ENCODE measurements at regions of chr7 and their contacts with region 1.

Region 1: GRCh38 chr7:148503875-148504487 is 86.6 kb upstream of the C7orf33 start:
- DNase-seq: no peak
- ATAC-seq: no peak
- H3K4me3 Mint-ChIP-seq: no peak overlapping the region
- H3K27ac Mint-ChIP-seq: no peak overlapping the region
- H3K4me1 Mint-ChIP-seq: peaks cover 36% of the 10 kb centered on the region
- H3K27me3 Mint-ChIP-seq: peaks cover 24% of the 10 kb centered on the region

Region 2: GRCh38 chr7:148230296-148230695 is 273.7 kb before region 1 on chr7:
- CTCF ChIA-PET with region 1: no interaction called
- POLR2A ChIA-PET with region 1: no interaction called
- intact Hi-C with region 1: no loop called
- DNase-seq: no peak
- ATAC-seq: no peak
- H3K4me3 Mint-ChIP-seq: no peak overlapping the region
- H3K27ac Mint-ChIP-seq: no peak overlapping the region
- H3K4me1 Mint-ChIP-seq: no peaks in the 10 kb centered on the region
- H3K27me3 Mint-ChIP-seq: peaks cover 7% of the 10 kb centered on the region

Region 3: GRCh38 chr7:148385009-148385682 is 118.8 kb before region 1 on chr7:
- CTCF ChIA-PET with region 1: no interaction called
- POLR2A ChIA-PET with region 1: no interaction called
- intact Hi-C with region 1: no loop called
- DNase-seq: no peak
- ATAC-seq: no peak
- H3K4me3 Mint-ChIP-seq: no peak overlapping the region
- H3K27ac Mint-ChIP-seq: no peak overlapping the region
- H3K4me1 Mint-ChIP-seq: no peaks in the 10 kb centered on the region
- H3K27me3 Mint-ChIP-seq: peaks cover 3% of the 10 kb centered on the region

Region 4: GRCh38 chr7:148527707-148528168 is 23.8 kb after region 1 on chr7:
- CTCF ChIA-PET with region 1: interaction called, 20 read pairs
- POLR2A ChIA-PET with region 1: no interaction called
- intact Hi-C with region 1: loop called (anchors 1 kb)
- DNase-seq: peak; percentile 95
- ATAC-seq: peak; percentile 99
- H3K4me3 Mint-ChIP-seq: no peak overlapping the region
- H3K27ac Mint-ChIP-seq: no peak overlapping the region
- H3K4me1 Mint-ChIP-seq: peaks cover 6% of the 10 kb centered on the region
- H3K27me3 Mint-ChIP-seq: peaks cover 32% of the 10 kb centered on the region

Region 5: DNA sequence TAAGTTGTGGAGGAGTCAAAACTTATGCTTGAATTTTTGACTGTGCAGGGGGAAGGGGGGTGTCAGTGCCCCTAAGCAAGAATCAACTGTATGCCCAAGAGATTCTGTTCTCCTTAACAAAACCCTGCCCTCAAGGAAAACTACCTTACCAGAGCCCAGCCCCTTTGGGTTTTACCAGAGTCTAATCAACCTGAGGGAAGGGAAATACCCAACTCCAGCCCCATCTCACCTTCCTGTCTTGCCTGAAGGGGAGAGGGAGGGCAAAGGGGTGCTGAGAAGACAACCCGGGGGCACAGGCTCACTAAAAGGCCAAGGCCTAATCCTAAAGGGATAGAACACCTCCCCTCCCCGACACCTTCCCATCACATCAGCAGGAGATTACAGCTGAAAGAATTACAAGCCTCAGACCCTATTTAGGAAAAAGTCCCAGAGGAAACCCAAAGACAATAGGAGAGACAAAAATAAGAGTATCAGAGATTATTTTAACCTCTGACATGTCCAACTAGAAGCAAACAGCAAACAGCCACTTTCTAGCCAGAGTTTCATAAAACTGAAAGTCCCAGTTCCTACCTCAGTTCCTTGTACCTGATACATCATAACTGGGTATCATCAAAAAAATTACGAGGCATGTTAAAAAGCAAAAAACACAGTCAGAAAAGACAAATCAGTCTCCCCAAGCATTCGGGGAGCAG is 59.7 kb after region 1 on chr7:
- CTCF ChIA-PET with region 1: interaction called, 5 read pairs
- POLR2A ChIA-PET with region 1: no interaction called
- intact Hi-C with region 1: loop called (anchors 1 kb)
- DNase-seq: no peak
- ATAC-seq: peak; percentile 57
- H3K4me3 Mint-ChIP-seq: peak overlapping the region; percentile 40
- H3K27ac Mint-ChIP-seq: peak overlapping the region; percentile 81
- H3K4me1 Mint-ChIP-seq: peaks cover 17% of the 10 kb centered on the region
- H3K27me3 Mint-ChIP-seq: peaks cover 8% of the 10 kb centered on the region

Region 6: DNA sequence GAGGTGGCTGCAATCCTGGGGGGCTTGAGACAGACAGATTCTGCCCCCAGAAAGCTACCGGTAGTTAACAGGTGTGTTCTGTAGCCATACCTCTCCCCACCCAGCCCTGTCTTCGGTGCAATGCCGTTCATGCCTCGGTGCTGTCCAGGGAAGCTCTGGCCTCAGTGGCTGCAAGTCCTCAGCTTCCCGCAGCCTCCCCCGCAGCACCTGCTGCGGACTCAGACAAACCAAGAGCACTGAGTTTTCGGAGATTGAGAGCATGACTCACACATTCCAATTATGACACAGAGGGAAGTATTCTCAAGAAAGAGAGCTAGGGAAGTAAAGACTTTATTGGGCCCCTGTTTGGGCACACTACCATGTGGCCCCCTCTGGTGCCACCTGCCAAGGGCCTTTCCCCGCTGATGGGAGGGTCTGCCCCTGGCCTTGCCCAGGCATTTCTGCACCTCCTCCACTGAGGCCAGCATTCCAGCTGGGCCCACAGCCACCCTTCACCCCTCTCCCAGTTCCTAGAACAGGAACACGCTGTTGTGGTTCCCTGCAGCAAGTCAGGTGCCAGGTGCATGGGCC is 410.3 kb after region 1 on chr7:
- CTCF ChIA-PET with region 1: no interaction called
- POLR2A ChIA-PET with region 1: interaction called, 4 read pairs
- intact Hi-C with region 1: loop called (anchors 1 kb)
- DNase-seq: peak; percentile 82
- ATAC-seq: peak; percentile 62
- H3K4me3 Mint-ChIP-seq: peak overlapping the region; percentile 47
- H3K27ac Mint-ChIP-seq: peak overlapping the region; percentile 98
- H3K4me1 Mint-ChIP-seq: peaks cover 73% of the 10 kb centered on the region
- H3K27me3 Mint-ChIP-seq: no peaks in the 10 kb centered on the region

Region 7: GRCh38 chr7:149245244-149245643 is 741.3 kb after region 1 on chr7:
- CTCF ChIA-PET with region 1: no interaction called
- POLR2A ChIA-PET with region 1: no interaction called
- intact Hi-C with region 1: loop called in 1 of 2 experiments (anchors 5 kb)
- DNase-seq: peak; percentile 79
- ATAC-seq: peak; percentile 85
- H3K4me3 Mint-ChIP-seq: peak overlapping the region; percentile 48
- H3K27ac Mint-ChIP-seq: peak overlapping the region; percentile 96
- H3K4me1 Mint-ChIP-seq: peaks cover 72% of the 10 kb centered on the region
- H3K27me3 Mint-ChIP-seq: no peaks in the 10 kb centered on the region